Activated CD4-positive, alpha-beta T cell treated with anti-CD3 and anti-CD28 coated beads, Interleukin-2, amount 10 ng/mL, durations not matched to agents 24 days and 14 days (primary cell): ENCODE measurements at regions of chr12 and their contacts with region 1.

Region 1: DNA sequence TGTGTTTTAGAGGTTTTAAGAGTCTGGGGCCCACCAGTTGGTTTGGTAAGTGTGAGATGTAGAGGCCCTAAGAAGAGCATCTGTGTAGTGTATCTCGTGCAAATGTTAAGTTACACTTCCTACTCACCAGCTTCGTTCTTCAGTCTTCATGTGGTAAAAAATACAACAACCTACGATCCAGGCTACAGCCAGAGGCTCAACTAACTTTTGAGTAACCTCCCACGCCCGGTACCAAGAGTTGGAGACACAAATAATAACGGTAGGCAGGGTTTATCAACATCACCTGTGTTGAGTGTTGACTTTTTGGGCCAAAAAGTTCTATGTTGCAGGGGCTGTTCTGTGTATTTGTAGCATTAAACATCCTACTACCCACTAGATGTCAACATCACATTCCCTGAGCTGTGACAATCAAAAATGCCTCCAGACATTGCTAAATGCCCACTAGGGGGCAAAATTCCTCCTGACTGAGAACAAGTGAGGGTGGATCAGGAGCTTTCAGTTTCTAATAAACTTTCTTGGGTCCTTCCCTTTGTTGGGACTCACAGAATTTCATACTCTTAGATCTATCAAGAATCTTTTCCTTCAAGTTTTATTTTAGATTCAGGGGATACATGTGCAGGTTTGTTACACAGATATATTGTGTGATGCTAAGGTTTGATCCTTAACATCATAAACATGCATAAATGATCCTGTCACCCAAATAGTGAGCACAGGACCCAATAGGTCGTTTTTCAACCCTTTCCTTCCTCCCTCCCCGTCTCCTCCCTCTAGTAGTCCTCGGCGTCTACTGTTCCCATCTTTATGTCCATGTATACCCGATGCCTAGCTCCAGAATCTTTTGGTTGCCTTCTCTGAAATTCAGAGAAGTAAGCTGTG is 94.7 kb downstream of the SLC2A13 start:
- DNase-seq: peak; percentile 88
- H3K4me3 Mint-ChIP-seq: peak overlapping the region; percentile 61
- H3K27ac Mint-ChIP-seq: peak overlapping the region; percentile 16
- H3K4me1 Mint-ChIP-seq: peaks cover 20% of the 10 kb centered on the region
- H3K27me3 Mint-ChIP-seq: peaks cover 3% of the 10 kb centered on the region

Region 2: DNA sequence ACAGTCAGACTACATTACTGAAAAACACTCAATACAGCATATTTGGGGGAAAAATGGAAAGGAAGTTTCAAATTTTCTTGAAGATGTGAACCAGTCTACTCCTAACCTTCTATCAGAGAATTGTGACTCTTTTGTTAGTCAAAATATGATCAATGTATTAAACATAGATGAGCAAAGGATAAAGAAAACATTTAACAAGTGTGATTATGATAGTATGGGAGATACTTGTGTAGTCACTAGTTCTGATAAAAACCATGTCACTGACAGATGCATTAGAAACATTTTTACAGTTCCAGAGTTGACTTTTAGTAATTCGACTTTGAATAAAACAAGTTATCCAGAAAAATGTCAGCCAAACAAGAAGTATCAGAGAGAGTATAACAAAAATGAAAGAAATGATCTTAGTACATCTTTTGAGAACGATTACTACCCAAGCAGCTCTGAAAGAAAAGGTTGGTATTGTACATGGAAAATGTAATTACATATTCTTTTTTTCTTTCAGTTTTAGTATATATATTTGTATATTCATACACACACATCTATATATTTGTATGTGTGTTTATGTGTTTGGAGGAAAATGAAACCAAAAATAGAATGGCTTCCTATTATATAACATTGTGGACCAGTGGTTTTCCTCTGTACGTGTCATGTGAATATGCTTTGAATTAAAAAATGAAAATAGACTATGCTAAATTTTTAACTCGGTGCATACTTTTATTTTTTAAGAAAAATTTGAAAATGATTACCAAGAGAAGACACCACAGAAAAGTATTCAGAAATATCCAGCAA is 328.3 kb before region 1 on chr12:
- intact Hi-C with region 1: no loop called
- DNase-seq: no peak
- H3K4me3 Mint-ChIP-seq: peak overlapping the region; percentile 78
- H3K27ac Mint-ChIP-seq: peak overlapping the region; percentile 78
- H3K4me1 Mint-ChIP-seq: peaks cover 40% of the 10 kb centered on the region
- H3K27me3 Mint-ChIP-seq: no peaks in the 10 kb centered on the region

Region 3: DNA sequence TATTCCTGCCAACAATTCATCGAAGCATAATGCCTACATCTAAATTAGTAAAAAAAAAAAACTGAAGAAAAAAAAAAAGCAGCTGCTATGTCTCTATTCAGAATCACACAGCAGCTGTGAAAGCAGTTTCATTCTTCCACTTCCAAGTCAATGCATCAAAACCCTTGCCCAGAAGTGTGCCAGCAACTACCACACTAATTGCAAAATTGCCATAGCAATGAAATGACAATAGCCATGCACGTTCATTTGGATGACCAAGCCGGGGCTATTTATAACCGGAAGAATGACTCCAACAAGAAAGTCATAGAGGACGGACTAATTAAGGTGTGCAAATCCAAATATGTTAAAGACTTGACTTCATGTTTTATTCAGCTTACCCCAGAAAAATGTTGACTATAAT is 52.3 kb after region 1 on chr12:
- intact Hi-C with region 1: no loop called
- DNase-seq: no peak
- H3K4me3 Mint-ChIP-seq: no peak overlapping the region
- H3K27ac Mint-ChIP-seq: no peak overlapping the region
- H3K4me1 Mint-ChIP-seq: no peaks in the 10 kb centered on the region
- H3K27me3 Mint-ChIP-seq: peaks cover 4% of the 10 kb centered on the region

Region 4: GRCh38 chr12:40312982-40313576 is 301.9 kb after region 1 on chr12:
- intact Hi-C with region 1: loop called (anchors 10 kb)
- DNase-seq: no peak
- H3K4me3 Mint-ChIP-seq: no peak overlapping the region
- H3K27ac Mint-ChIP-seq: no peak overlapping the region
- H3K4me1 Mint-ChIP-seq: no peaks in the 10 kb centered on the region
- H3K27me3 Mint-ChIP-seq: peaks cover 1% of the 10 kb centered on the region